Spleen (tissue), 13 donors: ENCODE measurements at regions of chr2 and their contacts with region 1.

Region 1: GRCh38 chr2:136384531-136385303 is 266.8 kb upstream of the CXCR4 start:
- DNase-seq: no peak
- H3K4me3 ChIP-seq: peak overlapping the region in 1 of 8 donors; percentile 30
- H3K27ac ChIP-seq: peak overlapping the region in 1 of 8 donors; percentile 13
- H3K4me1 ChIP-seq: peaks cover 0 to 43% (median 27%) of the 10 kb centered on the region in 6 donors
- H3K27me3 ChIP-seq: no peaks in the 10 kb centered on the region
- CTCF ChIP-seq: peak; percentile 55 to 86 (median 80)
- POLR2A ChIP-seq: no peak

Region 2: GRCh38 chr2:135916207-135916606 is 468.5 kb before region 1 on chr2:
- intact Hi-C with region 1: loop called (anchors 5 kb)
- DNase-seq: no peak
- H3K4me3 ChIP-seq: no peak overlapping the region
- H3K27ac ChIP-seq: peak overlapping the region in 3 of 8 donors; percentile 13 to 41 (median 37)
- H3K4me1 ChIP-seq: peaks cover 0 to 24% (median 2%) of the 10 kb centered on the region in 6 donors
- H3K27me3 ChIP-seq: no peaks in the 10 kb centered on the region
- CTCF ChIP-seq: peak in 10 of 11 experiments; percentile 25 to 63 (median 54)
- POLR2A ChIP-seq: no peak

Region 3: GRCh38 chr2:136351684-136352083 is 33.0 kb before region 1 on chr2:
- intact Hi-C with region 1: no loop called
- DNase-seq: no peak
- H3K4me3 ChIP-seq: no peak overlapping the region
- H3K27ac ChIP-seq: no peak overlapping the region
- H3K4me1 ChIP-seq: no peaks in the 10 kb centered on the region
- H3K27me3 ChIP-seq: no peaks in the 10 kb centered on the region
- CTCF ChIP-seq: no peak
- POLR2A ChIP-seq: no peak

Region 4: GRCh38 chr2:136665736-136666135 is 281.0 kb after region 1 on chr2:
- intact Hi-C with region 1: no loop called
- DNase-seq: no peak
- H3K4me3 ChIP-seq: no peak overlapping the region
- H3K27ac ChIP-seq: no peak overlapping the region
- H3K4me1 ChIP-seq: no peaks in the 10 kb centered on the region
- H3K27me3 ChIP-seq: no peaks in the 10 kb centered on the region
- CTCF ChIP-seq: no peak
- POLR2A ChIP-seq: no peak